ENCODE measurements at regions of chrX and their contacts with region 1.

Region 1: DNA sequence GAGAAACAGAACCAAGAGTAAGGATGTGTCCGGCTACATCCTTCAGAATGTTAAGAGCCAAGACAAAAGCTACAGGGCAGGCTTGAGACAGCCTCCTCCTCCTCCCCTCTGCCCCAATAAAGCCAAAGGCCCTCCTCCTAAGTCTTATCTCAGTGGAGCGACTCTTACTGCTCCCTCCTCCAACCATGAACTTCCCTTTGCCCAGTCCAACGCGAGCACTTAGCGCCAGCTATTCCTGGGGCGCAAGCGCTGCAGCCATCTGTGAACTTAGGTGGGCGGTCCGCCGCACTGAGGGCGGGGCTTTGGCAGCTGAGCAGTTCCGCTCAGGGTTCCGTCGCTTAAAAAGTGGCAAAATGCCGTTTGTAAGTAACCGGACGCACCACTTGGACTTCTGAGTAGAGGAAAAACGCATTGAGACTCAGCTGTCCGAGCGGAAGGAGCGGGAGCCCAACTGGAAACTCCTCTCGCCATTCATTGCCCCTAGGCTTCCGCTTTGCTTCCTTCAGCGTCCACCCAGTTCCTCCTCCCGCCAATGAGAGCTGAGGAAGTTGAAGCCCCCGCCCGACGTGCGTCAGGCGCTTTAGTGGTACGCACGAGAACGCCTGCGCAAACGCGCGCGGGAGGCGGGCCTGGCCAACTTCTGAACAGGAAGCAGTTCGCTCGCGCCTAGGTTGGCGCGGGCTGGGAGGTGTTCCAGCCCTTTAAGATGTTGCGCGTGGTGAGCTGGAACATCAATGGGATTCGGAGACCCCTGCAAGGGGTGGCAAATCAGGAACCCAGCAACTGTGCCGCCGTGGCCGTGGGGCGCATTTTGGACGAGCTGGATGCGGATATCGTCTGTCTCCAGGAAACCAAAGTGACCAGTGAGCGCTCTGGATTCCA is at the start of gene APEX2:
- DNase-seq: peak; percentile 90 to 92
- H3K4me3 ChIP-seq: peak within 1 kb of the TSS in 2 of 3 donors; percentile 32 to 43
- H3K27ac ChIP-seq: peak within 1 kb of the TSS; percentile 52 to 81 (median 69)
- H3K4me1 ChIP-seq: peaks cover 0 to 3% of the 10 kb centered on the region in 2 donors
- H3K27me3 ChIP-seq: no peaks in the 10 kb centered on the region
- CTCF ChIP-seq: no peak
- POLR2A ChIP-seq: peak in 1 of 2 donors; percentile 63
- total RNA-seq, gene APEX2: 7.0 to 13.9 (median 9.7) TPM

Region 2: DNA sequence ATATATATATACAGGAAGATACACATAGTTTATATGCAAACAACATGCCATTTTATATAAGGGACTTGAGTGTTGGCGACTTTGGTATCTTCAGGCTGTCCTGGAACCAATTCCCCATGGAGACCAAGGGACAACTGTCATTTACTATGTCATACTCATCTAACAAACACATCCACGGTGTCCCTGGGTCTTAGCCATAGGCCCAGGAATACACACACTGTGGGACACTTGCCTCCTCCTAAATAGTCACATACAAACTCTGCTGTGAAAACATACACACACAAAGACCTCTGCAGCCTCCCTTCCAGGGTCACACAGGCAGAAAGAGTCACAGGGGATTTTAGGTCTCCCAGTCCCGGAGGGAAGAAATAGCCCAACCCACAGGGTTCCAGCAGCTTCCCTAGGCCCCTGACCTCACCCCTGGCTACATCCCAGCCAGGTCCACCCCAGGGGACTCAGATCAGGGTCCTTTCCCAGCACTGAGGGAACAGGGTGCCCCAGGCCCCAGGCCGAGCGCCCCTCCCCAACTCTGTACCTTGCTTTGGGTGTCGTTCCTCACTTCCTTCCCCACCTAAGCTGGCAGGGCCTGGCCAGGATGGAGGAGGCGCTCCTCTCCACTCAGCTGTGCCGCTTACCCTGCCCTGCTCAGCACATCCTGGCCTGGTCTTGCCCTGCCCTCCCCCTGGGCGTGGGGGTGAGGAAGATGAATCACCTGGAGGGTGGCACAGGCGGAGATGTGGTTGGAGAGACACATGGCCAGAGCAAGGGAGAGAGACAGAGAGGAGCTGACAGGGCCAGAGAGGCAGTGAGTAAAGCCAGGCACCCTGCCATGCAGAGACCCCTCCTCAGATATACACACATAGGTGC is 525.7 kb before region 1 on chrX:
- intact Hi-C with region 1: no loop called
- DNase-seq: no peak
- H3K4me3 ChIP-seq: no peak overlapping the region
- H3K27ac ChIP-seq: no peak overlapping the region
- H3K4me1 ChIP-seq: peaks cover 1 to 3% of the 10 kb centered on the region in 2 donors
- H3K27me3 ChIP-seq: no peaks in the 10 kb centered on the region
- CTCF ChIP-seq: no peak
- POLR2A ChIP-seq: no peak

Region 3: GRCh38 chrX:54639346-54640102 is 360.4 kb before region 1 on chrX:
- intact Hi-C with region 1: loop called (anchors 10 kb)
- DNase-seq: peak; percentile 96
- H3K4me3 ChIP-seq: peak overlapping the region in 1 of 3 donors; percentile 17
- H3K27ac ChIP-seq: peak overlapping the region; percentile 66 to 90 (median 85)
- H3K4me1 ChIP-seq: no peaks in the 10 kb centered on the region
- H3K27me3 ChIP-seq: no peaks in the 10 kb centered on the region
- CTCF ChIP-seq: peak in 5 of 6 experiments; percentile 18 to 56 (median 55)
- POLR2A ChIP-seq: peak in 1 of 2 donors; percentile 74

Region 4: GRCh38 chrX:54817220-54817820 is 182.6 kb before region 1 on chrX:
- intact Hi-C with region 1: loop called (anchors 10 kb)
- DNase-seq: no peak
- H3K4me3 ChIP-seq: no peak overlapping the region
- H3K27ac ChIP-seq: no peak overlapping the region
- H3K4me1 ChIP-seq: no peaks in the 10 kb centered on the region
- H3K27me3 ChIP-seq: no peaks in the 10 kb centered on the region
- CTCF ChIP-seq: no peak
- POLR2A ChIP-seq: no peak

Region 5: DNA sequence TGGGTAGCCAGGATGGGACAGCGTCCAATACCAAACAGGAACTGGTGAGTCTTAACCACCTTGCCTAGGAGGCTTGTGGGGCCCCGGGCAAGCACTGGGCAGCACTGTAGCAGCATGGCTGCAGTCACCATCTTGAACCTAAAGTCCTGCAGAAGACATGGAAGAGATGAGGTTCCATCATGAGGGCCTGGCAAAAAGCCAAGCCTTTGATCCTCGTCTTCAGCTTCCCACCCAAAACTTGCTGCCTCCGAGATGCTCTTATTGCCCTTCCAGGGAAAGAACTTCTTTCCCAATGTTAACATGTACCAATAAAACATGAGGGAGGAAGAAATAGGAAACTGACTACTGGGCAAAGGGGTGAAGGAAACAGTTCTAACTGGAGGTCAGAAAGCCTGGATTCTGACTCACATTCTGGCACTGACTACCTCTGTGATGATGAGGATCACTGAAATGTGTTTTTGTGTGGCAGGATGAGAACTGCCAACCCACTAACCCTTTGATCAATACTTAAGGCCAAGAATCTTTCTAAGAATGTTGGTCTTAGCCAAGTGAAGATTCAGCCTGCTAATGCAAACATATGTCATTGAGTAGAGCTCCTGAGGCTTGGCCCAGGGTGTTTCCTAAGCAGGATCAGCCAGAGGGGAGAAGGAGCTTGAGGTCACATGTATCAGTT is 26.0 kb after region 1 on chrX:
- intact Hi-C with region 1: no loop called
- DNase-seq: no peak
- H3K4me3 ChIP-seq: no peak overlapping the region
- H3K27ac ChIP-seq: no peak overlapping the region
- H3K4me1 ChIP-seq: no peaks in the 10 kb centered on the region
- H3K27me3 ChIP-seq: no peaks in the 10 kb centered on the region
- CTCF ChIP-seq: no peak
- POLR2A ChIP-seq: no peak

Region 6: GRCh38 chrX:55268091-55268490 is 268.1 kb after region 1 on chrX:
- intact Hi-C with region 1: no loop called
- DNase-seq: no peak
- H3K4me3 ChIP-seq: no peak overlapping the region
- H3K27ac ChIP-seq: no peak overlapping the region
- H3K4me1 ChIP-seq: no peaks in the 10 kb centered on the region
- H3K27me3 ChIP-seq: no peaks in the 10 kb centered on the region
- CTCF ChIP-seq: no peak
- POLR2A ChIP-seq: no peak

Measured in thyroid gland (tissue), 4 donors.